CD4-positive, alpha-beta T cell (primary cell): ENCODE measurements at regions of chr3 and their contacts with region 1.

Region 1: GRCh38 chr3:129627429-129628168 is 21.1 kb upstream of the PLXND1 start:
- DNase-seq: peak; percentile 55 to 83 (median 62)
- ATAC-seq: peak; percentile 86
- H3K4me3 ChIP-seq: peak overlapping the region; percentile 66
- H3K4me3 Mint-ChIP-seq: peak overlapping the region; percentile 92
- H3K27ac ChIP-seq: peak overlapping the region in 1 of 2 donors; percentile 27
- H3K27ac Mint-ChIP-seq: peak overlapping the region; percentile 66
- H3K4me1 ChIP-seq: peaks cover 28% of the 10 kb centered on the region
- H3K4me1 Mint-ChIP-seq: peaks cover 17% of the 10 kb centered on the region
- H3K27me3 ChIP-seq: no peaks in the 10 kb centered on the region
- H3K27me3 Mint-ChIP-seq: no peaks in the 10 kb centered on the region
- CTCF ChIP-seq: peak; percentile 70

Region 2: DNA sequence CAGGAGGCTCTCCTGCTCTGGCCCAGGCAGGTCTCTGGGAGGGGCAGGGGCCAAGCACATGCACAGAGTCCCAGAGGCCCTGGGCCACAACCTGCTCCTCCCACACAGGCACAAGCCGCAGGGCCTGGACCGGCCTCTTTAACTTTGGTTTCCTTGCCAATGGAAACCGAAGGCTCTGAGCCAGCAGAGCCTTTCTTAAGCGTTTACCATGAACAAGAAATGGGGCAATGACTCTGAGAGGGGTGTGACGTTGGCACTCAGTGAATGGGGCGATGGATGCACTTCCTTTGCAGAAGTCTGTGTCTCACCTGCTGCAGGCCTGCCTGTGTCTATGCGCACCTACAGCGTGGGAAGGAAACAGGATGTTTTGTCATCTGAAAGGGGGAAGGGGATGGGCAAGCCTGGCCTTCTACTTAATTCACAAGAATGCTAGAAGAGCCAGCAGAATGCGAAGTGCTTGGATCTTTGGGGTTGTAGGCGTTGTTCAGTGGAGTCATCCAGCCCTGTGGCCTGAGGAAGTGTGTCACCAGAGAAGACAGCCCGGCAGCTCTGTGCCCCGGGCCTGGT is 145.8 kb before region 1 on chr3:
- CTCF ChIA-PET with region 1: no interaction called
- POLR2A ChIA-PET with region 1: no interaction called
- intact Hi-C with region 1: no loop called
- DNase-seq: peak; percentile 40 to 84 (median 56)
- ATAC-seq: peak; percentile 98
- H3K4me3 ChIP-seq: no peak overlapping the region
- H3K4me3 Mint-ChIP-seq: peak overlapping the region; percentile 11
- H3K27ac ChIP-seq: peak overlapping the region; percentile 60 to 80
- H3K27ac Mint-ChIP-seq: peak overlapping the region; percentile 86
- H3K4me1 ChIP-seq: peaks cover 15% of the 10 kb centered on the region
- H3K4me1 Mint-ChIP-seq: peaks cover 22% of the 10 kb centered on the region
- H3K27me3 ChIP-seq: no peaks in the 10 kb centered on the region
- H3K27me3 Mint-ChIP-seq: no peaks in the 10 kb centered on the region
- CTCF ChIP-seq: no peak

Region 3: DNA sequence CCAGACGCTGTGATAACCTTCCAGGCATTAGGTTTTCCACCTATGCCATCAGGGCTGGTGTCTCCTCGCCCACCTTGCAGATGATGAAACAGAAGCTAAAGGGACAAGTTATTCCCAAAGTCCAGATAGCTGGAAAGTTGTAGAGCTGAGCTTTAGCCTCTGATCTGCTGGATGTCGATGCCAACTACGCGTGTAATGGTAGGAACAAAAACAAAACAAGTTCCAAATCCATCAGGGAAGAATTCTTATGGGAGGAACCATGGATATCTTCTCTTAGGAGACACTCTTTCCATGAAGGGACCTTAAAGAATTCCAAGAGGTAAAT is 127.3 kb before region 1 on chr3:
- CTCF ChIA-PET with region 1: no interaction called
- POLR2A ChIA-PET with region 1: no interaction called
- intact Hi-C with region 1: no loop called
- DNase-seq: no peak
- ATAC-seq: no peak
- H3K4me3 ChIP-seq: no peak overlapping the region
- H3K4me3 Mint-ChIP-seq: no peak overlapping the region
- H3K27ac ChIP-seq: no peak overlapping the region
- H3K27ac Mint-ChIP-seq: no peak overlapping the region
- H3K4me1 ChIP-seq: no peaks in the 10 kb centered on the region
- H3K4me1 Mint-ChIP-seq: no peaks in the 10 kb centered on the region
- H3K27me3 ChIP-seq: no peaks in the 10 kb centered on the region
- H3K27me3 Mint-ChIP-seq: no peaks in the 10 kb centered on the region
- CTCF ChIP-seq: no peak

Region 4: GRCh38 chr3:129645290-129645689 is 17.7 kb after region 1 on chr3:
- CTCF ChIA-PET with region 1: no interaction called
- POLR2A ChIA-PET with region 1: no interaction called
- intact Hi-C with region 1: no loop called
- DNase-seq: no peak
- ATAC-seq: no peak
- H3K4me3 ChIP-seq: no peak overlapping the region
- H3K4me3 Mint-ChIP-seq: no peak overlapping the region
- H3K27ac ChIP-seq: no peak overlapping the region
- H3K27ac Mint-ChIP-seq: no peak overlapping the region
- H3K4me1 ChIP-seq: no peaks in the 10 kb centered on the region
- H3K4me1 Mint-ChIP-seq: peaks cover 3% of the 10 kb centered on the region
- H3K27me3 ChIP-seq: no peaks in the 10 kb centered on the region
- H3K27me3 Mint-ChIP-seq: no peaks in the 10 kb centered on the region
- CTCF ChIP-seq: no peak

Region 5: DNA sequence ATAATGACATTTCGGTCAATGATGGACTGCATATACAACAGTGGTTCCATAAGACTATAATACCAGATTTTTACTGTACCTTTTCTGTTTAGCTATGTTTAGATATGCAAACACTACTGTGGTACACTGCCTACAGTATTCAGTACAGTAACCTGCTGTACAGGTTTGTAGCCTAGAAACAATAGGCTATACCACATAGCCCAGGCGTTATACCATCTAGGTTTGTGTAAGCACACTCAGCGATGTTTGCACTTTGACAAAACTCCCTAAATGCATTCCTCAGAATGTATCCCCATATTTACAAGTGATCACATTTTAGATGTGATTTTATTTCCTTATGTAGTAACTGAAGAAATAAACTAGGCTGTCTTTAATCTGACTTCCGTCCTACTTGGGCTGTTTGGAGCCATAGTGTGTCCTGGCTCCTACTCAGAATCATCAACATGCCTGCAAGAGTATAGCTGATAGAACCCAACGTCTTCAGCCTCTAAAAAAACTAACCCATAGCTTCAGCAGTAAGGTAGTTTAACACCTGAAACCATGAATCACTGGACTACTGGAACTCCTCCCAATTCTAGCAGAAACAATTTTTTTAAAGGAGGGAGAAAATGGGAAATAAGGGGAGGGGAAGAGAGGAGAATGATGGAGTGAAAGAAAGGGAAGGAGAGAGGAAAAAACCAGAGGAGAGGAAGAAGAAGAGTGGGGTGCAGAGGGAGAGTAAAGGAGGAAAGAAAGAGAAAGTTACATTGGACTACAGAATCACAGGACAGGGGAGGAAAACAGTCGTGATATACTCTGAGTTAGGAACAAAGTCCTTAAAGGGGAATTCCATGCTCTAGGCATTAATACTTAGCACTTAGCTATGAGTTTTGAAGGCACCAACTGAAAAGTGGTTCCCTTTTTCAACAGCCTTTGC is 46.5 kb after region 1 on chr3:
- CTCF ChIA-PET with region 1: no interaction called
- POLR2A ChIA-PET with region 1: no interaction called
- intact Hi-C with region 1: no loop called
- DNase-seq: no peak
- ATAC-seq: no peak
- H3K4me3 ChIP-seq: no peak overlapping the region
- H3K4me3 Mint-ChIP-seq: no peak overlapping the region
- H3K27ac ChIP-seq: no peak overlapping the region
- H3K27ac Mint-ChIP-seq: no peak overlapping the region
- H3K4me1 ChIP-seq: no peaks in the 10 kb centered on the region
- H3K4me1 Mint-ChIP-seq: peaks cover 4% of the 10 kb centered on the region
- H3K27me3 ChIP-seq: no peaks in the 10 kb centered on the region
- H3K27me3 Mint-ChIP-seq: no peaks in the 10 kb centered on the region
- CTCF ChIP-seq: no peak

Region 6: DNA sequence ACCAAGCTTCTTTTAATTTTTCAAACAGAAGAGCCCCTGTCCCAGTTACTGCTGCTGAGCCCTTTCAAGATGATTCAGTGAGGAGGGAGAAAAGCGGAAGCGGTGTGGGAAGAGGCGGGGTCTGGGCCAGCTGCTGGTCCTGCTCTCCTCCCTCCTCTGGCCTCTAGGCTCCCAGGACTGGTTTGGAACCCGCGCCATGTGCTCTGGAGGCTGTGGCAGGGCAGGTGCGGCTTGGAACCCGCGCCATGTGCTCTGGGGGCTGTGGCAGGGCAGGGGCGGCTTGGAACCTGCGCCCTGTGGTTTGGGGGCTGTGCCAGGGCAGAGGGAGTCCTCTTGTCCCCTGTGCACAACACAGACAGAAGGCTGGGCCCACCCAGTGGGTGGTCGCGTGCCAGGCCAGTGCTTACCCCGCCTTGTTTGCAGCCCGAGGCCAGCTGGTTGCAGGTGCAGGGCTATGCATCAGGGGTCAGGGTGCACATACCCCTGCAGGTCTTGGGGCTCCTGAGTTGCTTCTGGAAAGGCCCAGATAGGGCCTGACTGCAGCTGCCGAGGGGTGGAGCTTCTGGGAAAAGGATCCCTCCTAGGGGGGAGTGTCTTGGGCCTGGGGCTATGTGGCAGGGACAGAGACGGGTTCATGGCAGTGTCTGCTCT is 466.3 kb after region 1 on chr3:
- CTCF ChIA-PET with region 1: no interaction called
- POLR2A ChIA-PET with region 1: no interaction called
- intact Hi-C with region 1: loop called in 1 of 2 experiments (anchors 5 kb)
- DNase-seq: peak in 7 of 14 experiments; percentile 6 to 43 (median 11)
- ATAC-seq: no peak
- H3K4me3 ChIP-seq: peak overlapping the region; percentile 32
- H3K4me3 Mint-ChIP-seq: peak overlapping the region; percentile 73
- H3K27ac ChIP-seq: no peak overlapping the region
- H3K27ac Mint-ChIP-seq: no peak overlapping the region
- H3K4me1 ChIP-seq: peaks cover 21% of the 10 kb centered on the region
- H3K4me1 Mint-ChIP-seq: peaks cover 25% of the 10 kb centered on the region
- H3K27me3 ChIP-seq: no peaks in the 10 kb centered on the region
- H3K27me3 Mint-ChIP-seq: no peaks in the 10 kb centered on the region
- CTCF ChIP-seq: no peak